Motor neuron (in vitro differentiated cells): ENCODE measurements at regions of chr10 and their contacts with region 1.

Region 1: GRCh38 chr10:73529089-73529832 is 33.4 kb upstream of the PPP3CB start:
- ATAC-seq: peak; percentile 71 to 95 (median 82)
- H3K4me3 ChIP-seq: no peak overlapping the region
- H3K27ac ChIP-seq: no peak overlapping the region
- H3K4me1 ChIP-seq: no peaks in the 10 kb centered on the region

Region 2: DNA sequence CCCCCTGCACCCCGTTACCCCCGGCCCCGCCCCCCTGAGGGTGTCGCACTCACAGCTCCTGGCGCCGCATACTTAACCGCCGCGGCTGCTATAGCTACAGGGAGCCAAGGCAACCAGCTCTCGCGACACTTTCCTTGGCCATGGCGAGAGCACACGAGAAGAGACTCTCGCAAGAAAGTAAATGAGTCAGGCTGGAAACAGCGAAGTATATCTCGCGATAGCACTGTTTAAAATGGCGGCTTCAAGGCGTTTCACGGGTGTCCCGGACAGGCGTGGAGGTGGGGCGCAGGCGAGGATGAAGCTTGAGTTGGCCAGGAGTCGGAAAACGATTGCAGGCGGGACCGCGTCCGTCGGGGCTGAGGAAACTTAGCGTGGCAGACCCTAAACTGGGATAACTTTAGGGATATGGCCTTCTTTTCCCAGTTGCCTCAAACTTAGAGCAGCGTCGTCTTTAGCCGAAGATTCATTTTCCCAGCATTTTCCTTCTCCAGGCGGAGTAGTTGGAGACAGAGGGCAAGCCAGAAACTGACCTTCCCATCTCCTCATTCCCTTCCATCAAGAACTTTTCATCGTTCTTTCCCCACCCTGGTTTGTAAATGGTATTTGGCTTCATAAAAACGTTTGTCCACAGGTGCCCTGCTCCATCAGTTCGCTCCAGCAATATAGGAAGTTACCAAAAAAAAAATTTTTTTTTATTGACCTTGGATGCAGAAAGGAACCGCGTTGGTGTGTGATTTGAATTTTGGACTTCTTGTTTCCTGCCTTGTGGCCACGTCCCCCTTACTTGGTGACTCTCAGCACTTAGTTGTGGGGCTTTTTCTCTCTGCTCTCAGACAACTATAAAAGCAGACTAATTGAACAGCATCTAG is 96.9 kb after region 1 on chr10:
- in situ Hi-C with region 1: loop called in 5 of 9 experiments (anchors 10 to 25 kb)
- ATAC-seq: peak; percentile 94 to 99 (median 96)
- H3K4me3 ChIP-seq: peak overlapping the region; percentile 81 to 99 (median 89)
- H3K27ac ChIP-seq: peak overlapping the region; percentile 83 to 93
- H3K4me1 ChIP-seq: peaks cover 9% of the 10 kb centered on the region in 2 donors

Region 3: DNA sequence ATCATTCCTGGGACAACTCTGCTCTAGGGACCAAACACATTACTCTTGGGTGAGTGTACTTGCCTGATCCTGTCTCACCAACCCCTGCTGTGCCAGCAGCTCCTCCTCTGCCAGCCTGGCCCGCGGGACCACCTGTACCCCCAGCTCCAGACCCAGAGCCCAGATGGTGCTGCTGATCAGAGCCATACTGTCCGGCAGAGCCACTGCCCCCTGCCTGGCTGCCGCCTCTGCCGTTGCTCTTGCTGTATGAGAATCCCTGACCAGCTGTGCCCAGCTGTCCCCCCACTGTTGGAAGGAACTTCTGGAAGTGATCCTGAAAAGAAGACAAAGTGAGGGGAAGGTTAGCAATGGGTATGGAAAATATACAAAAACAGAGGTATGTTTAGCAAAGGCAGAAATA is 105.2 kb after region 1 on chr10:
- in situ Hi-C with region 1: loop called in 5 of 9 experiments (anchors 10 to 25 kb)
- ATAC-seq: no peak
- H3K4me3 ChIP-seq: no peak overlapping the region
- H3K27ac ChIP-seq: no peak overlapping the region
- H3K4me1 ChIP-seq: no peaks in the 10 kb centered on the region

Region 4: DNA sequence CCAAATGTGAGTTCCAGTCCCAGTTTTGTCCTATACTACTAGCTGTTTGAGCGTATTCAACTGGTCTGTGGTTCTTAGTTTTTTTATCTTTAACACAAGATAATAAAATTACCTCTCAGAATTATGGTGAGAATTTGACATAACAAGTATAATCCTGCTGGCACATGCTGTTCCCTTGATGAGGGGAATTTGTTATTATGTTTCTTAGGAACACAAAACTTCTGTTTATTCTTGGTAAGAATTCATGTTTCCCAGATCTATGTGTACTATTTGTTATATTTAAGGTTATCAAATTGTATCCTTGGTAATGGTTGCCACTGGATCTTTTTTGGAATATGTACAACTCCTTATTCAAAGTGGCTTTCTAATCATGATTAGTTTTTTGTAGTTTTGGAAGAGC is 957.4 kb after region 1 on chr10:
- in situ Hi-C with region 1: no loop called
- ATAC-seq: no peak
- H3K4me3 ChIP-seq: no peak overlapping the region
- H3K27ac ChIP-seq: no peak overlapping the region
- H3K4me1 ChIP-seq: no peaks in the 10 kb centered on the region